H1 (cell line): ENCODE measurements at regions of chr17 and their contacts with region 1.

Region 1: DNA sequence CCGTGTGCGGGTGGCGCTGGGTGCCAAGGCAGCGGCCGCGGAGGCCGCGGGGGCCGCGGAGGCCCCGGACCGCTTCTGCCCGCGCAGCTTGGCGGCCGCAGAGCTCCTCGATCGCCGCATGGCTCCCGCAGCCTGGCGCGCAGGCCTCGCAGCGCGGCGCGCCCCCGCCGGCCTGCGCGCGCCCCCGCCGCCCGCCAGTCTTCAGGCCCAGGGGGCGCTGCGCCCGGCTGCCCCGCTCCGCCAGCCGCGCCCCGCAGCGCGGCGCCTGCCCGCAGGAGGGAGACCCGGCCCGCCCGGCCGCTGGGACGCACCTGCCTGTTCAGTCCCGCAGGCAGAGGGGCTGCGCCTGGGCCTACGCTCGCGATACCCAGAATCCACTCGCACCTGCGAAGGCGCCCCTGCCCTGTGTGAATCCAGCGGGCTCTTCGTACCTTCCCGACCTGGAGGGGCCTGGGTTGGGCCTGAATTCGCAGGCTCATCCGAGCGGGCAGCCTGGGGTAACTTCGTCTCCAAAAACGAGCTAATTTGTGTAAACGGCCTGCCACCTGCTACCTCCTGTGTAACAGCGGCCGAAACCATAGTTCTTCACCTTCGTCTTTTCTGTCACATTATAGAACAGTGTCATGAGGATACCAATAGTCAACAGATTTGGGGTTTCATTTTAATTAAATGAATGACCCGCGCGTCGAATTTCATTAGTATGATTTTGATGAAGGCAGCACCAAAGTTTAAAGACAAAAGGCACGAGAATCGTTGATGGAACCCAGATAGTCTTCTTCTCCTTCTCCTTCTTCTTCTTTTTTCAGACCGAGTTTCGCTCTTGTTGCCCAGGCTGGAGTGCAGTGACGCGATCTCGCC is at the start of gene CENPV:
- DNase-seq: peak; percentile 54 to 88
- H3K4me3 ChIP-seq: peak within 1 kb of the TSS; percentile 78 to 95 (median 86)
- H3K27ac ChIP-seq: peak within 1 kb of the TSS; percentile 55
- H3K4me1 ChIP-seq: 0 out of 7 replicates have a peak, but pooled peaks cover 0 to 2% (median 0%) of the 10 kb centered on the region in 4 experiments
- H3K27me3 ChIP-seq: no peaks in the 10 kb centered on the region; a peak in 1 of 7 replicates
- CTCF ChIP-seq: peak; percentile 13 to 32 (median 14); a peak in 3 of 4 replicates
- EP300 ChIP-seq: no peak
- POLR2A ChIP-seq: peak; percentile 54 to 56; a peak in 2 of 3 replicates
- RAD21 ChIP-seq: no peak
- total RNA-seq, gene CENPV: 249 and 255 TPM in 2 replicates

Region 2: DNA sequence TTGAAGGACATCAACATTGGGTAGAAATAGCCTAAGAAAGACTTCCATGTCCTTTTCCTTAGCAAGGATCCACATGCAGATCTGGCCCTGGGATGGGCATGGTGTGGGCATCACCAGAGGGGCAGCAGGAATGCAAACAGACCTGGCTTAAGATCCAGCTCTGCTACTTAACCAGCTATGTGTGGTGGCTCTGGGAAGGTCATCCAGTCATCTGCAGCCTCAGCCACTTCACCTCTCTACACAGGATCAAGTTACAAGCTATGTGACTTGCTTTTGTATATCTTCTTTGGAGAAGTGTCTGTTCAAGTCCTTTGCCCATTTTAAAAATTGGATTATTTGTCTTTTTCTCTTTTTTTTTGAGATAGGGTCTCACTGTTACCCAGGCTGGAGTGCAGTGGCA is 422.2 kb before region 1 on chr17:
- CTCF ChIA-PET with region 1: no interaction called
- POLR2A ChIA-PET with region 1: no interaction called
- DNase-seq: no peak
- H3K4me3 ChIP-seq: no peak overlapping the region
- H3K27ac ChIP-seq: no peak overlapping the region
- H3K4me1 ChIP-seq: no peaks in the 10 kb centered on the region
- H3K27me3 ChIP-seq: no peaks in the 10 kb centered on the region; a peak in 1 of 7 replicates
- CTCF ChIP-seq: no peak
- EP300 ChIP-seq: no peak
- POLR2A ChIP-seq: no peak
- RAD21 ChIP-seq: no peak

Region 3: GRCh38 chr17:16215273-16215964 is 138.1 kb before region 1 on chr17 and contains the start of gene NCOR1:
- CTCF ChIA-PET with region 1: interaction called, 3 read pairs
- POLR2A ChIA-PET with region 1: interaction called, 12 read pairs
- DNase-seq: peak; percentile 78 to 91
- H3K4me3 ChIP-seq: peak within 1 kb of the TSS; percentile 80 to 92 (median 90)
- H3K27ac ChIP-seq: peak within 1 kb of the TSS; percentile 95
- H3K4me1 ChIP-seq: peaks cover 0 to 6% (median 2%) of the 10 kb centered on the region in 4 experiments; a peak in 5 of 7 replicates
- H3K27me3 ChIP-seq: no peaks in the 10 kb centered on the region
- CTCF ChIP-seq: peak in 2 of 3 experiments; percentile 9 to 21; a peak in 2 of 4 replicates
- EP300 ChIP-seq: peak in 1 of 2 experiments; percentile 72; a peak in 1 of 3 replicates
- POLR2A ChIP-seq: peak; percentile 88 to 94
- RAD21 ChIP-seq: peak; percentile 14 to 40; a peak in 2 of 4 replicates
- total RNA-seq, gene NCOR1: 141 and 142 TPM in 2 replicates

Region 4: DNA sequence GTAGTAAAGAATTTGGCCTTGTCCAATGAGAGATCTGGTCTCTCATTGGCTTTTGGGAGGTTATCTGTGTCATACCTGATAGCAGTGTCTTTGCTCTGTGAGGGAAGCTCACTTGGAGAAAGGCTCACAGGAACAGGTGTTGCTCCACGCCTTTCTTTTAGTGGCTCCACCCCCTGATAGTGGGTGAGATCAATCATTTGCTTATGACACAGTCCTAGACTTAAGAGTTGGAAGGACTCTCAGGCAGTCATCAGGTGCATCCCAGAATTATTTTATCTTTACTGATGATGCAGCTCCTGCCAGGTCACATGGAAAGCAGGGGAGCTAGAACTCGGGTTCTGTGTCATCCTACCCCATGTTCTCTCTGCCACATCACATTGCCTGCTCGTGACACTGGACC is 59.6 kb before region 1 on chr17:
- CTCF ChIA-PET with region 1: no interaction called
- POLR2A ChIA-PET with region 1: no interaction called
- DNase-seq: no peak
- H3K4me3 ChIP-seq: no peak overlapping the region
- H3K27ac ChIP-seq: no peak overlapping the region
- H3K4me1 ChIP-seq: peaks cover 0 to 5% (median 4%) of the 10 kb centered on the region in 4 experiments; a peak in 4 of 7 replicates
- H3K27me3 ChIP-seq: no peaks in the 10 kb centered on the region
- CTCF ChIP-seq: no peak
- EP300 ChIP-seq: no peak
- POLR2A ChIP-seq: no peak
- RAD21 ChIP-seq: no peak

Region 5: GRCh38 chr17:16325964-16326363 is 27.6 kb before region 1 on chr17:
- CTCF ChIA-PET with region 1: no interaction called
- POLR2A ChIA-PET with region 1: interaction called, 10 read pairs
- DNase-seq: no peak
- H3K4me3 ChIP-seq: no peak overlapping the region
- H3K27ac ChIP-seq: no peak overlapping the region
- H3K4me1 ChIP-seq: no peaks in the 10 kb centered on the region; a peak in 1 of 7 replicates
- H3K27me3 ChIP-seq: no peaks in the 10 kb centered on the region
- CTCF ChIP-seq: no peak
- EP300 ChIP-seq: no peak
- POLR2A ChIP-seq: no peak
- RAD21 ChIP-seq: no peak

Region 6: GRCh38 chr17:16342979-16343378 is 10.6 kb before region 1 on chr17:
- CTCF ChIA-PET with region 1: interaction called, 3 read pairs
- POLR2A ChIA-PET with region 1: interaction called, 71 read pairs
- DNase-seq: no peak
- H3K4me3 ChIP-seq: no peak overlapping the region
- H3K27ac ChIP-seq: no peak overlapping the region
- H3K4me1 ChIP-seq: no peaks in the 10 kb centered on the region
- H3K27me3 ChIP-seq: no peaks in the 10 kb centered on the region
- CTCF ChIP-seq: no peak
- EP300 ChIP-seq: no peak
- POLR2A ChIP-seq: no peak
- RAD21 ChIP-seq: no peak

Region 7: GRCh38 chr17:16380640-16381495 is 27.3 kb after region 1 on chr17 and contains the start of gene UBB:
- CTCF ChIA-PET with region 1: interaction called, 3 read pairs
- POLR2A ChIA-PET with region 1: interaction called, 49 read pairs
- DNase-seq: peak; percentile 93 to 98
- H3K4me3 ChIP-seq: peak within 1 kb of the TSS; percentile 85 to 95 (median 92)
- H3K27ac ChIP-seq: peak within 1 kb of the TSS; percentile 97
- H3K4me1 ChIP-seq: peaks cover 0 to 2% (median 0%) of the 10 kb centered on the region in 4 experiments; a peak in 4 of 7 replicates
- H3K27me3 ChIP-seq: no peaks in the 10 kb centered on the region
- CTCF ChIP-seq: peak in 1 of 3 experiments; percentile 14; a peak in 1 of 4 replicates
- EP300 ChIP-seq: peak; percentile 19 to 22; a peak in 2 of 3 replicates
- POLR2A ChIP-seq: peak; percentile 96 to 99
- RAD21 ChIP-seq: no peak; a peak in 1 of 4 replicates
- total RNA-seq, gene UBB: 1,585 and 1,597 TPM in 2 replicates